ENCODE measurements at regions of chr2 and their contacts with region 1.

Region 1: DNA sequence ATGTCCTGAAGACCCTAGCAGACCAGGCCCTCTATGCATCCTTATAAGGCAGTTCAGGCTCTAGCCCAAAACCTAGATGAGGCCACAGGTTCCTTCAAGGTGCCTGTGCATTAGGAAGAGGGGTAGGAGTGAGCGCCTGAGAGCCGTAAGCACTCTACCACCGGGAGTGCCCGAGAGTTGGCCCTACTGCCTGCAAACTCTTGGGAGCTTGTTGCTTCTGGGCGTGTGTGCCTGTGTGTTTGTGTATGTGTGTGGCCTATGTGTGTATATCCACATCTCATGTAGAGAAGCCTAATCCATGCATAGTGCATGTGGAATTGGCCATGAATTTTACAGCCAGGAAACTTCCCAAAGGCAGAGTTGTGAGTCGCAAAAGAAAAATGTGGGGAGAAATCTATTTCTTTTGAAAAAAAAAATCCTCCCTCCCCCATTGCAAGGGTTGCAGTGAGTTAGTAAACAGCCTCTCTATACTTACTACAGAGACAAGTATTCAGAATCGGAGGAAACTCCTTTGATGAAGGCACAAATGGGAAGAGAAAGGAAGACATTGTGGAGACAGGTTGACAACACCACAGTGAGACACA is 96.8 kb downstream of the ADD2 start:
- DNase-seq: no peak
- H3K4me3 ChIP-seq: no peak overlapping the region
- H3K27ac ChIP-seq: no peak overlapping the region
- H3K4me1 ChIP-seq: no peaks in the 10 kb centered on the region
- H3K27me3 ChIP-seq: peaks cover 0 to 2% (median 0%) of the 10 kb centered on the region in 5 experiments

Region 2: DNA sequence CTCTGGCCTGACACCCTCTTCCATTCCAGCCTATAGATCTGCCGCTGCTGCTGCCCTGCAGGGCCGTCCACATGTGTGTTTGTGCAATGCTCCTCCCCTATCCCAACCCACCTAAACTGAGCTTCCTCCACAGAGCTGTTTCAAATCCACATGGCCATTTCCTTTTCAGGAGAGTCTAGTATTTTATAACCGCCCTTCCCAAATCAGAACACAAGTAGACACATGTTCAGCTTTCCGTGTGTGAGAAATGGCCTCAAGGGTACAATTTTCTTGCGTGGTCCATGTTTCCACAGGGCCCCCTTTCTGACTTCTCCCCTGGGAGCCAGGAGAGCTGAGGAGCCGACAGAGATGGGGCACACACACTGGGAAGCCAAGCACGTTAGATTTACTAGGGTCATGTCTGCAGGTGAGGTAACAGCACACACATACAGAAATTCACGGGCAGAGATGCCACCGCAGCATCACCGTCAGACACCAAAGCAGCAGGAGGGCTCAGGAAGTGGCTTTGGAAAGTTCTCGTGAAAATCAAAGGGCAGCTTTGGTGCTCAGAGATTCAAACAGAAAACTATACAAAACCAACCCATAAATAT is 14.7 kb before region 1 on chr2:
- CTCF ChIA-PET with region 1: interaction called, 10 read pairs
- POLR2A ChIA-PET with region 1: no interaction called
- DNase-seq: no peak
- H3K4me3 ChIP-seq: no peak overlapping the region
- H3K27ac ChIP-seq: no peak overlapping the region
- H3K4me1 ChIP-seq: no peaks in the 10 kb centered on the region
- H3K27me3 ChIP-seq: peaks cover 2 to 26% (median 22%) of the 10 kb centered on the region in 5 experiments

Region 3: DNA sequence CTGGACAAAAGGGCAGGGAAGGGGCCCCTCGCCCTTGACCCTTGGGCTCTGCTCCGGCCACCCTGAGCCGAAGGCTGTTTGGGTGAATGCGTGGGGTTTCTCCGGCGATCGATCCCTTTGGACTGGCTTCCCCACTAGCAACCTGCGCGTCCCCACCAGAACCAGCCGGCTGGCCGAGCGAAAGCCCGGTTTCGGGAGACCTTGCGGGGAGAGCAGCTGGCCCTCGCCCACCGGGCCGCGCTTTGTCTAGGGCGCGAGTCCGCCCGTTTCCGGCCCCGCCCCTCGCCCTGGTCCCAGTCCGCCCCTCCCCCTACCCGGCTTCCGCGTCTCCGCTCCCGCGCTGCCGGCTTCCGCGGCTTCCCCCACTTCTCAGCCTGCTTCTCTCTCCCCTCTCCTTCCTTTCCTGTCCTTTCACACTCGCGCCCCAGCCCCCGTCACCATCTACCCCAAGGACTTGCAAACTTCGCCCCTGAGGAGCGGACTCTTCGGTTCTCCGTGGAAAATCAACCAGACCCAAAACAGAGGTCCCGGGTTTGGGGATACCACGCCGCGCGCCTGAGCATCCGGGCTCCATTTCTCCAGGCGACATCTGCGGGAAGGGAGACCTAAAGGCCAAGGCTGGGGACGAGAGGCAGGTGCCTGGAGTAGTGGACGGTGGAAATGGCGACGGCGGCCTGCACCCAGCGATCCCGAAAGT is 216.5 kb after region 1 on chr2:
- CTCF ChIA-PET with region 1: no interaction called
- POLR2A ChIA-PET with region 1: no interaction called
- DNase-seq: no peak
- H3K4me3 ChIP-seq: peak overlapping the region in 3 of 7 experiments; percentile 19 to 40 (median 36)
- H3K27ac ChIP-seq: no peak overlapping the region
- H3K4me1 ChIP-seq: peaks cover 0 to 22% (median 15%) of the 10 kb centered on the region in 4 experiments
- H3K27me3 ChIP-seq: peaks cover 22 to 99% (median 60%) of the 10 kb centered on the region in 5 experiments